Activated CD4-positive, alpha-beta T cell treated with anti-CD3 and anti-CD28 coated beads, Interleukin-2, amount 10 ng/mL, durations not matched to agents 24 days and 14 days (primary cell): ENCODE measurements at regions of chr17 and their contacts with region 1.

Region 1: GRCh38 chr17:82648166-82648668 is at the start of gene WDR45B:
- DNase-seq: peak; percentile 97
- H3K4me3 Mint-ChIP-seq: peak within 1 kb of the TSS; percentile 88
- H3K27ac Mint-ChIP-seq: peak within 1 kb of the TSS; percentile 85
- H3K4me1 Mint-ChIP-seq: peaks cover 20% of the 10 kb centered on the region
- H3K27me3 Mint-ChIP-seq: no peaks in the 10 kb centered on the region
- total RNA-seq, gene WDR45B: 62.8 and 66.8 TPM in 2 replicates

Region 2: DNA sequence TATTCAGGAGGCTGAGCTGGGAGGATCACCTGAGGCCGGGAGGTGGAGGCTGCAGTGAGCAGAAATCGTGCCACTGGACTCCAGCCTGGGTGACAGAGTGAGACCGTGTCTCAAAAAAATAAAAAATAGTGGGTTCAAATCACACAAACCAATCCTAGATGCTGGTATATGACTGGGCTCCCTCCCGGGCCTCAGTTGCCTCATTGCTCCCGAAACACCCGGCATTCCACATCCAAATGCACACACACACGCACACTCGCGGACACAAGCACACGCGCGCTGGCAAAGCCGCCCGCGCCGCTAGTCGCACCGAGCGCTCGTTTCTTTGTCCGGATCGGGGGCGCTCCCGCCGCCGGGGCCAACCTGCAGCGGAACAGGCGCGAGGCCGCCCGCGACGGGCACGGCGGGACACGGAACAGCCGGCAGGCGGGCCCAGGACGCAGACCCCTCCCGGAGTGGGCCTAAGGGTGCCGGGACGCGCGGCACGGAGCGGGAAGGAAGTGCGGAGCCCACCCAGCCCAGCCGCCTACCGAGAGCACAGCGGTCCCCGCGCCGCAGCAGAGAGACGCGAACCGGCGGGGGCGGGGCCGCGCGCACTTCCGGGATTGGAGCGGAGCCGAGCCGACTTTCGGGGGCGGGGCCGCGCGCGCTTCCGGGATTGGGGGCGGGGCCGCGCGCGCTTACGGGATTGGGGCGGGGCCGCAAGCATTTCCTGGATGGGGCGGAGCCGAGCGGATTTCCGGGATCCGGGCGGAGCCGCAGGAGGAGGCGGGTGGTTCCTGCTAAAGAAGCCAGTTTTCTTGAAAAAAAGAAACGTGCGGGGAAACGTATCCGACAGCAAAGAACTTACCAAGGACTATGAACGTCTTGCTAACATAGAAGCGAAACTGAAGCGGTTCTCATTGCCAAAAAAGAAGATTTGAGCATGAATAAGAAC is 197.8 kb before region 1 on chr17 and contains the start of gene CYBC1:
- intact Hi-C with region 1: loop called (anchors 5 kb)
- DNase-seq: peak; percentile 98
- H3K4me3 Mint-ChIP-seq: peak within 1 kb of the TSS; percentile 89
- H3K27ac Mint-ChIP-seq: peak within 1 kb of the TSS; percentile 95
- H3K4me1 Mint-ChIP-seq: peaks cover 20% of the 10 kb centered on the region
- H3K27me3 Mint-ChIP-seq: no peaks in the 10 kb centered on the region
- total RNA-seq, gene CYBC1: 256 and 268 TPM in 2 replicates

Region 3: GRCh38 chr17:82698065-82698973 is 50.1 kb after region 1 on chr17 and contains the start of gene RAB40B:
- intact Hi-C with region 1: loop called (anchors 2 kb)
- DNase-seq: peak; percentile 99
- H3K4me3 Mint-ChIP-seq: peak within 1 kb of the TSS; percentile 84
- H3K27ac Mint-ChIP-seq: no peak within 1 kb of the TSS
- H3K4me1 Mint-ChIP-seq: peaks cover 4% of the 10 kb centered on the region
- H3K27me3 Mint-ChIP-seq: peaks cover 10% of the 10 kb centered on the region
- total RNA-seq, gene RAB40B: 4.9 and 5.4 TPM in 2 replicates

Region 4: GRCh38 chr17:82751571-82752370 is 103.6 kb after region 1 on chr17 and contains the start of gene TBCD:
- intact Hi-C with region 1: loop called (anchors 1 kb)
- DNase-seq: peak; percentile 96
- H3K4me3 Mint-ChIP-seq: peak within 1 kb of the TSS; percentile 93
- H3K27ac Mint-ChIP-seq: peak within 1 kb of the TSS; percentile 87
- H3K4me1 Mint-ChIP-seq: peaks cover 24% of the 10 kb centered on the region
- H3K27me3 Mint-ChIP-seq: no peaks in the 10 kb centered on the region
- total RNA-seq, gene TBCD: 117 and 122 TPM in 2 replicates